Gastrocnemius medialis (tissue), 4 donors: ENCODE measurements at regions of chr6 and their contacts with region 1.

Region 1: GRCh38 chr6:107957909-107958688 is at the start of gene SEC63:
- DNase-seq: peak; percentile 96 to 97
- ATAC-seq: peak; percentile 96
- H3K4me3 ChIP-seq: peak within 1 kb of the TSS; percentile 68 to 95 (median 73)
- H3K27ac ChIP-seq: peak within 1 kb of the TSS; percentile 82 to 94 (median 86)
- H3K4me1 ChIP-seq: peaks cover 17 to 24% of the 10 kb centered on the region in 2 donors
- H3K27me3 ChIP-seq: no peaks in the 10 kb centered on the region
- CTCF ChIP-seq: peak in 2 of 5 experiments; percentile 5 to 6
- POLR2A ChIP-seq: peak; percentile 91
- total RNA-seq, gene SEC63: 10.1 to 23.1 (median 11.2) TPM

Region 2: DNA sequence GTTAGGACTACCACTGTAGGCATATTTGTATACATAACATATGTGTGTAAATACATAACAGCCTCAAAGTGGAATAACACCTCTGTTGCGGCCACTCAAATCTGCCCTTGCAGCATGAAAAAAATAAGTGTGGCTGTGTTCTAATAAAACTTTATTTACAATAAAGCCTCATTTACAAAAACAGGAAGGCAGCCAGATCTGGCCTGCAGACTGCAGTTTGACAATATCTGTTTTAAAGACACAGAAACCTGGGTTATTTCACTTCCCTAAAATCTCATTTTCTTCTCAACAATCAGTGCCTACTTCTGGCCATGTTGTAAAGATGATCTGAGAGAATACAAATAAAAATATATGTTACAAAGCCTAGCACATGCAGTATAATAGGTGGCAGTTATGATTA is 80.1 kb before region 1 on chr6:
- in situ Hi-C with region 1: no loop called
- intact Hi-C with region 1: no loop called
- DNase-seq: no peak
- ATAC-seq: no peak
- H3K4me3 ChIP-seq: no peak overlapping the region
- H3K27ac ChIP-seq: no peak overlapping the region
- H3K4me1 ChIP-seq: no peaks in the 10 kb centered on the region
- H3K27me3 ChIP-seq: no peaks in the 10 kb centered on the region
- CTCF ChIP-seq: no peak
- POLR2A ChIP-seq: no peak

Region 3: DNA sequence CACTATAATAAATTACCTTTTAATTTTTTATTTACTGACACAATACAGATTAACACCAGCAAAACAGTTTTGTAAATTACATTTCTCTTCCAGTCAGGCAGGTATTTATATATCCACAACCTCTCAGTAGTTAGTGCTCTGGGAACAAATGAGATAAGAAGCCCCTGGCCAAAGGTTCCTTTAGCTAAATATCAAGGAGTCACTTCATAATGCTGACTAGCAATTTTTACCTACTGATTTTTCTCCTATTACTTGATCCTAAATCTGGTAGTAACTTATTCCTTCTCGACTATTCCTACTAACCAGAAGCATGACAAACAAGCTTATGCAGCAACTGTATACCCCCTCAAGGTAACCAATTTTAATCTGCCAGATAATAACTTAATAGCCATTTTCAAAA is 46.4 kb before region 1 on chr6:
- in situ Hi-C with region 1: no loop called
- intact Hi-C with region 1: no loop called
- DNase-seq: no peak
- ATAC-seq: no peak
- H3K4me3 ChIP-seq: no peak overlapping the region
- H3K27ac ChIP-seq: no peak overlapping the region
- H3K4me1 ChIP-seq: no peaks in the 10 kb centered on the region
- H3K27me3 ChIP-seq: no peaks in the 10 kb centered on the region
- CTCF ChIP-seq: no peak
- POLR2A ChIP-seq: no peak

Region 4: GRCh38 chr6:108039681-108040080 is 81.6 kb after region 1 on chr6:
- in situ Hi-C with region 1: no loop called
- intact Hi-C with region 1: no loop called
- DNase-seq: no peak
- ATAC-seq: no peak
- H3K4me3 ChIP-seq: no peak overlapping the region
- H3K27ac ChIP-seq: no peak overlapping the region
- H3K4me1 ChIP-seq: no peaks in the 10 kb centered on the region
- H3K27me3 ChIP-seq: no peaks in the 10 kb centered on the region
- CTCF ChIP-seq: no peak
- POLR2A ChIP-seq: no peak

Region 5: GRCh38 chr6:108074359-108075144 is 116.5 kb after region 1 on chr6 and contains the start of gene OSTM1:
- in situ Hi-C with region 1: no loop called
- intact Hi-C with region 1: loop called (anchors 1 kb)
- DNase-seq: peak; percentile 73 to 85
- ATAC-seq: peak; percentile 97 to 98
- H3K4me3 ChIP-seq: peak within 1 kb of the TSS; percentile 90 to 99 (median 94)
- H3K27ac ChIP-seq: peak within 1 kb of the TSS; percentile 85 to 91 (median 88)
- H3K4me1 ChIP-seq: peaks cover 8 to 11% of the 10 kb centered on the region in 2 donors
- H3K27me3 ChIP-seq: no peaks in the 10 kb centered on the region
- CTCF ChIP-seq: peak in 2 of 5 experiments; percentile 8 to 22
- POLR2A ChIP-seq: peak; percentile 94 to 97
- total RNA-seq, gene OSTM1: 28.3 to 64.3 (median 40.0) TPM